H1 (cell line): ENCODE measurements at regions of chr18 and their contacts with region 1.

Region 1: GRCh38 chr18:55275039-55275901 is 312.7 kb downstream of the TCF4 start:
- DNase-seq: no peak
- H3K4me3 ChIP-seq: no peak overlapping the region
- H3K27ac ChIP-seq: no peak overlapping the region
- H3K4me1 ChIP-seq: no peaks in the 10 kb centered on the region
- H3K27me3 ChIP-seq: no peaks in the 10 kb centered on the region
- CTCF ChIP-seq: peak in 1 of 3 experiments; percentile 38; a peak in 1 of 4 replicates
- EP300 ChIP-seq: no peak
- POLR2A ChIP-seq: no peak
- RAD21 ChIP-seq: peak; percentile 18 to 28; a peak in 2 of 4 replicates

Region 2: DNA sequence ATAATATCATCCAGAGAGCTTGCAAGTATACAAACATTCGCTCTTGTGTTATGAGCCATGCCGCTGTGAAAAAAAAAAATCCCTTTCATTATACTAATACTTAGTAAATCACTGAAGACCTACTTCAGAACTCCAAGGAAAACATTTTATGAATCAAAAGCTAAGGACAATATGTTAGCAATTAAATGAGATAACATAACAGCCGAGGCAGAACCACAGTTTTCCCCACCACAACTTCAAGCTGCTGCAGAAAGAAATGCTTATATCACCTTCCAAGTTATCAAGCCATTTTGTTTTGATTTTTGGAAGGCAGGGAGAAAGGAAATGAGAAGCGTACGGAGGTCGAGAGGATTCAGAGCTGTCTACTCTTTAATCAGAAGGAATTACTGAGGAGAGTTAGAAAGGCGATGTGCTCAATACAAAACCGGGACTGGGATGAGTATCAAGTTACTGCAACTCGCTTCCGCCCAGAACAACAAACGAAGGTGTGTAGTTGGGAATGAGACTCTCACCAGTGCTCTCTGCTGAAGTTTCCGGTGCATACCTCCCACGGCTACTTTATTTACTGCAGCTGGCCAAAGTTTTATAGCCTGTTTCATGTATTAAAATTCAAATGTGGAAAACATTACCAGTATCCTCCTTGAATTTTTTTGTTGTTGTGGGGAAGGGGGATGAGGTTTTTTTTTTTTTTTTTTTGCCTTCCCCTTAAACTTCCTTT is 23.9 kb before region 1 on chr18:
- CTCF ChIA-PET with region 1: interaction called, 10 read pairs
- POLR2A ChIA-PET with region 1: no interaction called
- DNase-seq: no peak
- H3K4me3 ChIP-seq: no peak overlapping the region
- H3K27ac ChIP-seq: no peak overlapping the region
- H3K4me1 ChIP-seq: peaks cover 0 to 3% (median 0%) of the 10 kb centered on the region in 4 experiments; a peak in 1 of 7 replicates
- H3K27me3 ChIP-seq: no peaks in the 10 kb centered on the region
- CTCF ChIP-seq: no peak
- EP300 ChIP-seq: no peak
- POLR2A ChIP-seq: no peak
- RAD21 ChIP-seq: no peak

Region 3: DNA sequence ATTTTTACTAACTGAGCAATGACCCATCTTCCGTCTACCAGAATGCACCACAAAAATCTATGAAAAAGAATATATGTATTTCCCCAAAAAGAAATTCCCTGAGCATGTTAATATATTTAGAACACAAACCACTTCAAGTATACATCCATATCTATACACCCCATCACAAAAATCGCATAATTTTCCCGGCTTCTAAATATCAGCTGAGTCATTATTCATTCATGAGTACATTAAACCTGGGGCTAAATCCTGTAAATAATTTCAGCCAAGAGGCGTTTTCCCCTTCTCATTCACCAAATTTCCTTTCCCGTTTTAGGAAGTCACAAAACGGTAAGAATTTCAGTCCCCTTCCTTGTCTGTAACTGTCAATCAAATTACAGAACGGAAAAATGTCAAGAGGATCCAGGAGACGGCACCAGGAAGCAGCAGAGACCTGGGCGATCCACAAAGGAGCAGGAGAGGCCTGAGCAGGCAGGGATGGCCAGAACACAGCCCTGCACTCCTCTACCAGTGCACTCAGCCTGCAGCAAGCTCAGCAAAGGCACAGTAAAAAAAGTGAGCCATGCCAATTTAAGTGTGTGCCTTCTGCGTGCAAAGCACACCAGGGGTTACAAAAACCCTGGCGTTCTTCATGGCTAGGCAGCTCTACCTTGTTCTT is 12.0 kb after region 1 on chr18:
- CTCF ChIA-PET with region 1: interaction called, 27 read pairs
- POLR2A ChIA-PET with region 1: no interaction called
- DNase-seq: no peak
- H3K4me3 ChIP-seq: no peak overlapping the region
- H3K27ac ChIP-seq: no peak overlapping the region
- H3K4me1 ChIP-seq: peaks cover 0 to 7% (median 4%) of the 10 kb centered on the region in 4 experiments; a peak in 4 of 7 replicates
- H3K27me3 ChIP-seq: no peaks in the 10 kb centered on the region
- CTCF ChIP-seq: no peak
- EP300 ChIP-seq: no peak
- POLR2A ChIP-seq: no peak
- RAD21 ChIP-seq: no peak